Natural killer cell (primary cell): ENCODE measurements at regions of chr3 and their contacts with region 1.

Region 1: DNA sequence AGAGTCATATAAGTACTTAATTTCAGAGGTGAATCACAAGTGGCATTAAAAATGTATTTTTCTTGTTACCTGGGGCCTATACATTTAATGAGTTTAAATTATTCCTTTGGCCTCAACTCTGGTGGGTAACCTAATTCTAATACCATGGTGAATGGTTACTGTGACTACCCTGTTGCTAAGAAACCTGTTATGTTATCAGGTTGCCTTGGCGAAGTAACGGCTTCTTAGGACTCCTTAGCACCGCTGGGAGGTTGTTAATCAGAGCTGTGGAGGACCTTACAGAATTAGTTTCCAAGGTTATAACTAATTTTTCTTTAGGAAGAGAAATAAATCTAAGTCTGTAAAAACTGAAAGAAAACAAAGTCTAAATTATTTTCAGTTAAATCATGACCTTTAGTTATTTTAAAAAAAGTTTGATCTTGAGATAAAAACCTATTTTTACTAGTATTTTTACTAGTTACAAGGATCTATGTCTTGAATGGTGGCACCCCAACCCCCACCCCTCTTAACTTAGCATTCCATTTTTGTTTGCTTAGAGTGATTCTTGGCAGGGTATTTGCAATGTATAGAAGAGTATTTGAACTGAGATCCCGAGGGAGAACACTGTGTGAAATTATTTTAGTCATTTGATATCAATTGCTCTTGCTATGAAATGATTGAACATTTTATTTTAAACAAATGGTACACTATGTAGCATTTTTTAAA is 155.5 kb downstream of the FNDC3B start:
- DNase-seq: peak; percentile 10 to 24
- ATAC-seq: peak; percentile 84 to 98 (median 96)
- H3K4me3 ChIP-seq: no peak overlapping the region
- H3K4me3 Mint-ChIP-seq: peak overlapping the region; percentile 42
- H3K27ac ChIP-seq: no peak overlapping the region
- H3K27ac Mint-ChIP-seq: peak overlapping the region; percentile 82 to 83
- H3K4me1 ChIP-seq: peaks cover 6% of the 10 kb centered on the region
- H3K4me1 Mint-ChIP-seq: peaks cover 33 to 45% of the 10 kb centered on the region in 2 donors
- H3K27me3 ChIP-seq: no peaks in the 10 kb centered on the region
- H3K27me3 Mint-ChIP-seq: no peaks in the 10 kb centered on the region
- CTCF ChIP-seq: no peak

Region 2: DNA sequence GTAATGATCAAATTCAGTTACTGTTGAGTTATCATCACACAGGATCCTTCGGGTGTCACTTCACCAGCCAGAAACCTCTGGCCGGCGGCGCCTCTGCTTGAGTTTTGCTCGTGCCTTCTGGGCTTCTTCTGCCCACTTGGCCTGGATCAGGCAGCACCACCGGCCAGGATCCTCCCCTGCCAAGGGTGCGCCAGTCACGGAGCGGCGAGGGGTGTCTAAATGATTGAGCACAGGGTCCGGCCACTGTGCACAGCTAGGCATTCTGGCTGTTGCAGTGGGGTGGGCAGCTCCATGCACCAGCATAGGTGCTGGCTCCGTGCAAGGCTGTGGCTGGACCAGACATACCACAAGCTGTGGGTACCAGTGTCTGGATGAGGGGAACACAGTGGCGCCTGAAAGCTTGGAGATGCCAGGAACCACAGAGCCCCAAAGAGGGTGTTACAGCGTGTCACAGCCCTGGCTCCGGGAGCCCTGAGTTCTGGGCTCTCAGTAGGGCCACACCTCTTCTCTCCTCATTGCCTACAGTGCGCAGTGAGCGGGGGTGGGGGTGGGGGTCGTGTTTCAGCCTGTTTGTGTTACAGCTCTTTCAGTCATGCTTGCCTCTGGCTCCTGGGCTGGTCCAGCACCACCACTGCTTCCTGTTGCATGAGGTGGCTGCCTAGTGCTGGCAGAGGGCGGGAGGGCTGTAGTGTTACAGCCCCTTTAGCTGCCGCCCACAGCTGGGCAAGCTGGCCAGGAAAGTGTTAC is 13.9 kb after region 1 on chr3:
- intact Hi-C with region 1: loop called (anchors 2 kb)
- DNase-seq: peak in 1 of 2 donors; percentile 23
- ATAC-seq: peak; percentile 73 to 78 (median 76)
- H3K4me3 ChIP-seq: no peak overlapping the region
- H3K4me3 Mint-ChIP-seq: peak overlapping the region; percentile 62
- H3K27ac ChIP-seq: peak overlapping the region; percentile 46
- H3K27ac Mint-ChIP-seq: peak overlapping the region; percentile 68 to 86
- H3K4me1 ChIP-seq: peaks cover 18% of the 10 kb centered on the region
- H3K4me1 Mint-ChIP-seq: peaks cover 69 to 72% of the 10 kb centered on the region in 2 donors
- H3K27me3 ChIP-seq: no peaks in the 10 kb centered on the region
- H3K27me3 Mint-ChIP-seq: no peaks in the 10 kb centered on the region
- CTCF ChIP-seq: no peak